ENCODE measurements at regions of chr9 and their contacts with region 1.

Region 1: DNA sequence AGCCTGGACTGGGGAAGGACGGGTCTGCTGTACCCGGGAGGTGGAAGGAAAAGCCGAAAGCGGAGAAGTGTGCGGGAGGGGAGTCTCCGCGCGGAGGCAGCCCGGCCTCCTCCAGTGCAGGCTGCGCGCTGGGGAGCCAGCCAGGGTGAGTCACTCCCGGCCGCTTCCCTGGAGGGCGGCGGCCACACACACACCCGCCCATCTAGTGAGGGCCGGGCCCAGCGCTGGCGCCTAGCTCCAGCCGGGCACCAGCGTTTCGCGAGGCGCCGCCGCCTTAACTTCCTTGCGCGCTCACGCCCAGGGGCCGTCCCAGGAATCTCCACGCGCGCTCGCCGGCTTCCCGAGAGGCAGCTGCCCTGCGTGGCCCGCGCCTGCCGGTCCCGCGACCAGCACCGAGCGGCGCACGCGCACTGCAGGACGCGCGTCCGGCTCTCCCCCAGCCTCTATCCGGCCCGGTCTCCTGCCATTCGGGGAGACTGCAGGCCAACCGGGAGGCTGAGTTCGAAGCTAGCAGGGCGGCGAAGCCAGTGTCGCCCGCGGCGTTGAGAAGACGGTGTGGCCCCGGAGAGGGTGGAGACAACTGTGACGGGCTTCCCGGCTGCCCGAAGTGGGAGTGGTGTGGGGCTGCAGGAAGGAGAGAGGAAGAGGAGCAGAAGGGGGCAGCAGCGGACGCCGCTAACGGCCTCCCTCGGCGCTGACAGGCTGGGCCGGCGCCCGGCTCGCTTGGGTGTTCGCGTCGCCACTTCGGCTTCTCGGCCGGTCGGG is at the start of gene JAK2:
- DNase-seq: peak; percentile 82 to 87 (median 83)
- H3K4me3 ChIP-seq: peak within 1 kb of the TSS; percentile 53
- H3K4me3 Mint-ChIP-seq: peak within 1 kb of the TSS; percentile 90 to 97 (median 96)
- H3K27ac ChIP-seq: peak within 1 kb of the TSS; percentile 73
- H3K27ac Mint-ChIP-seq: peak within 1 kb of the TSS; percentile 83 to 97 (median 94)
- H3K4me1 ChIP-seq: peaks cover 45% of the 10 kb centered on the region
- H3K4me1 Mint-ChIP-seq: peaks cover 15 to 30% (median 24%) of the 10 kb centered on the region in 4 donors
- H3K27me3 ChIP-seq: no peaks in the 10 kb centered on the region
- H3K27me3 Mint-ChIP-seq: no peaks in the 10 kb centered on the region
- total RNA-seq, gene JAK2: 17.0 to 19.9 TPM

Region 2: GRCh38 chr9:4679268-4680172 is 305.3 kb before region 1 on chr9 and contains the start of gene CDC37L1:
- CTCF ChIA-PET with region 1: interaction called, 3 read pairs
- POLR2A ChIA-PET with region 1: interaction called, 5 read pairs
- intact Hi-C with region 1: loop called (anchors 5 kb)
- DNase-seq: peak; percentile 97 to 99 (median 99)
- H3K4me3 ChIP-seq: peak within 1 kb of the TSS; percentile 72 to 80
- H3K4me3 Mint-ChIP-seq: no peak within 1 kb of the TSS
- H3K27ac ChIP-seq: peak within 1 kb of the TSS; percentile 94
- H3K27ac Mint-ChIP-seq: no peak within 1 kb of the TSS
- H3K4me1 ChIP-seq: peaks cover 36% of the 10 kb centered on the region
- H3K4me1 Mint-ChIP-seq: peaks cover 11 to 16% (median 11%) of the 10 kb centered on the region in 4 donors
- H3K27me3 ChIP-seq: no peaks in the 10 kb centered on the region
- H3K27me3 Mint-ChIP-seq: no peaks in the 10 kb centered on the region
- total RNA-seq, gene CDC37L1: 27.2 to 27.8 TPM

Region 3: DNA sequence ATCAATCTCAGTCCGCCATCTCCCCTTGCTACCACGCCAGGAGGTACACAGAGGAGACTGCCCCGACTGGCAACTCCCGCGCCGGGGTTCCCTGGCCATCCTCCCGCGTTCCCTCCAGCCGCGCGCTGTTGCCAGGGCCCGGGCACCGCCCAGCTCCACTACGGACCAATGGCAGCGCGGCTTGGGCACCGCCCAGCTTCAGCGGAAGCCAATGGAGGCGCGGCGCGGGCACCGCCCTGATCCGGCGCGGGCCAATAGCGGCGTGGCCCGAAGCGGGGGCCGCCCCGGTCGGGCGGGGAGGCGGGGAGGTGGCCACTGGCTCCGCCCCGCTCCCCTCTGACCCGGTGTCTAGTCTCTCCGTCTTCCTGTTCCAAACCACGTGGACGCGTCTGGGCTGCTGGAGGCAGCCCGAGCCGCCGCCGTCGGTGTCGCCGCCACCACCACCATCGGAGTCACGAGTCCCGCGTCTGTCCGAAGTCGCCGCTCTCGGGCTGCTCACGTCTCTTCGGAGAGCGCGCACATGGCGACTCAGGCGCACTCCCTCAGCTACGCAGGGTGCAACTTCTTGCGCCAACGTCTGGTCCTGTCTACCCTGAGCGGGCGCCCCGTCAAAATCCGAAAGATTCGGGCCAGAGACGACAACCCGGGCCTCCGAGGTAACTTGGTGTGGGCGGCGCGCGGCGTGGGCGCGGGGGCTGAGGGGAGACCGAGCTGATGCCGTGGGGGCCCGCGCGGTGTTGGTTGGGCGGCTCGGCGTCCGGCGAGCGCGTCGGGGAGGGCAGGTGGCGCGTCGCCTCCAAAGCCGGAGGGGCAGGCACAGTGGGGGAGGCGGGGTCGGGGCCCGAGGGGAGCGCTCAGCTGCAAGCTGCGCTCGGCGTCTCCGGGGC is 192.0 kb before region 1 on chr9 and contains the start of gene RCL1:
- CTCF ChIA-PET with region 1: interaction called, 9 read pairs
- POLR2A ChIA-PET with region 1: interaction called, 42 read pairs
- intact Hi-C with region 1: loop called (anchors 1 kb)
- DNase-seq: peak; percentile 95 to 98 (median 97)
- H3K4me3 ChIP-seq: peak within 1 kb of the TSS; percentile 83 to 88
- H3K4me3 Mint-ChIP-seq: peak within 1 kb of the TSS; percentile 93 to 97 (median 95)
- H3K27ac ChIP-seq: peak within 1 kb of the TSS; percentile 70
- H3K27ac Mint-ChIP-seq: peak within 1 kb of the TSS; percentile 84 to 97 (median 96)
- H3K4me1 ChIP-seq: peaks cover 23% of the 10 kb centered on the region
- H3K4me1 Mint-ChIP-seq: peaks cover 29 to 52% (median 38%) of the 10 kb centered on the region in 4 donors
- H3K27me3 ChIP-seq: no peaks in the 10 kb centered on the region
- H3K27me3 Mint-ChIP-seq: peaks cover 0 to 4% of the 10 kb centered on the region in 2 donors
- total RNA-seq, gene RCL1: 15.2 to 17.8 TPM

Region 4: DNA sequence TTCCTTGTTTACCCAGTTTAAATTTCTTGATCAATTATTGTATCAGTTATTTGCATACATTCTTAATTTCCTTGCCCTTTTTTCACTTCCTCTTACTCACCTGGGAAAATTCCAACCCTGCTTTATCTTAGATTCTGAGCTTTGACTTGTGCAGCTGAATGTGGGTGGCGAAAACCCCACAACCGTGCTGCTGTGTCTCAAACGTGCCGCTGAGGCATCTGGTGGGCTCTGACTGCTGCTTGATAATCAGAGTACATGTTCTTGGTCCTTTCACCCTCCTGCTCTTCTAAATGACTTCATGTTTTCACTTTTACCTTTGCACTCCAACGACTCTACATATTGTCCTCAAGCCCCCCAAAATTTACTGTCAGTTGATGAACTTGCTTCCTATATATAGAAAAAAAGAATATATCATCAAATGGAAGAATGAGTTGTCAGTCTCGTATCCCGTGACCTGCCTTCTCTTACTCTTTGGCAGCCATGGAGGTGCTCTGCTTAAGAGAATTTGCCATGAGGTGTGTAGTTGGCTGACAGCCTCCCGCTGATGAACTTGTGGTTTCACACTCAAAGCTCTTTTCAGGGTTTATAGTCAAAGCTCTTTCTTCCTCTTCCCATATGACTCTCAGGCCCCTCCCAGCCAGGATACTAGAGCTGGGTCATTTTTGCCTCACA is 13.7 kb before region 1 on chr9:
- CTCF ChIA-PET with region 1: interaction called, 4 read pairs
- POLR2A ChIA-PET with region 1: interaction called, 11 read pairs
- intact Hi-C with region 1: loop called (anchors 1 kb)
- DNase-seq: peak in 4 of 5 donors; percentile 22 to 59 (median 30)
- H3K4me3 ChIP-seq: peak overlapping the region in 1 of 2 donors; percentile 20
- H3K4me3 Mint-ChIP-seq: no peak overlapping the region
- H3K27ac ChIP-seq: no peak overlapping the region
- H3K27ac Mint-ChIP-seq: no peak overlapping the region
- H3K4me1 ChIP-seq: peaks cover 15% of the 10 kb centered on the region
- H3K4me1 Mint-ChIP-seq: no peaks in the 10 kb centered on the region
- H3K27me3 ChIP-seq: no peaks in the 10 kb centered on the region
- H3K27me3 Mint-ChIP-seq: peaks cover 0 to 1% of the 10 kb centered on the region in 2 donors

Region 5: DNA sequence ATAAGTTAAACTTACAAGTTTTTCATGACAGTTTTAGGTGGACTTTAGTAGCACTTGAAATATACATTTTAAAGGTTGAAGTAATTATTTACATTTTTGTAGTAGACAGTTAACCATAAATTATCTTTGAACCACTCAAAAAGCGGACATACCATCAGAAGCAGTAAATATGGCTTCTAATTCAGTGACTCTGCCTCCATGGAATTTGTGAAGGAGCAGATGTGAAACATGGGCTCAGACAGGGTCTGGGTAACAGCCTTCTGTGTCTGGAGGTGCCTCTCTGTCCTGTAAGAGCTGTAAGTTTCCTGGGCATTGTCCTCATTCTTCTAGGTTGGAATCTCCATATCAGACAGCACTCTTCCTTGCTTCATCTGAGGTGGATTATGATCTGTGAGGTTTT is 307.3 kb after region 1 on chr9:
- CTCF ChIA-PET with region 1: no interaction called
- POLR2A ChIA-PET with region 1: no interaction called
- intact Hi-C with region 1: no loop called
- DNase-seq: no peak
- H3K4me3 ChIP-seq: no peak overlapping the region
- H3K4me3 Mint-ChIP-seq: no peak overlapping the region
- H3K27ac ChIP-seq: no peak overlapping the region
- H3K27ac Mint-ChIP-seq: no peak overlapping the region
- H3K4me1 ChIP-seq: no peaks in the 10 kb centered on the region
- H3K4me1 Mint-ChIP-seq: no peaks in the 10 kb centered on the region
- H3K27me3 ChIP-seq: no peaks in the 10 kb centered on the region
- H3K27me3 Mint-ChIP-seq: peaks cover 0 to 3% of the 10 kb centered on the region in 2 donors

Region 6: GRCh38 chr9:5832543-5833529 is 848.0 kb after region 1 on chr9 and contains the start of gene ERMP1:
- CTCF ChIA-PET with region 1: no interaction called
- POLR2A ChIA-PET with region 1: no interaction called
- intact Hi-C with region 1: loop called (anchors 2 kb)
- DNase-seq: peak; percentile 87 to 93 (median 90)
- H3K4me3 ChIP-seq: peak within 1 kb of the TSS; percentile 72 to 93
- H3K4me3 Mint-ChIP-seq: peak within 1 kb of the TSS; percentile 91 to 98 (median 96)
- H3K27ac ChIP-seq: peak within 1 kb of the TSS; percentile 53
- H3K27ac Mint-ChIP-seq: peak within 1 kb of the TSS; percentile 88 to 97 (median 95)
- H3K4me1 ChIP-seq: peaks cover 42% of the 10 kb centered on the region
- H3K4me1 Mint-ChIP-seq: peaks cover 33 to 58% (median 43%) of the 10 kb centered on the region in 4 donors
- H3K27me3 ChIP-seq: no peaks in the 10 kb centered on the region
- H3K27me3 Mint-ChIP-seq: no peaks in the 10 kb centered on the region
- total RNA-seq, gene ERMP1: 22.8 to 24.5 TPM